Activated CD8-positive, alpha-beta T cell treated with anti-CD3 and anti-CD28 coated beads, Interleukin-2, amount 10 ng/mL, durations not matched to agents 7 days and 5 days (primary cell): ENCODE measurements at regions of chr1 and their contacts with region 1.

Region 1: DNA sequence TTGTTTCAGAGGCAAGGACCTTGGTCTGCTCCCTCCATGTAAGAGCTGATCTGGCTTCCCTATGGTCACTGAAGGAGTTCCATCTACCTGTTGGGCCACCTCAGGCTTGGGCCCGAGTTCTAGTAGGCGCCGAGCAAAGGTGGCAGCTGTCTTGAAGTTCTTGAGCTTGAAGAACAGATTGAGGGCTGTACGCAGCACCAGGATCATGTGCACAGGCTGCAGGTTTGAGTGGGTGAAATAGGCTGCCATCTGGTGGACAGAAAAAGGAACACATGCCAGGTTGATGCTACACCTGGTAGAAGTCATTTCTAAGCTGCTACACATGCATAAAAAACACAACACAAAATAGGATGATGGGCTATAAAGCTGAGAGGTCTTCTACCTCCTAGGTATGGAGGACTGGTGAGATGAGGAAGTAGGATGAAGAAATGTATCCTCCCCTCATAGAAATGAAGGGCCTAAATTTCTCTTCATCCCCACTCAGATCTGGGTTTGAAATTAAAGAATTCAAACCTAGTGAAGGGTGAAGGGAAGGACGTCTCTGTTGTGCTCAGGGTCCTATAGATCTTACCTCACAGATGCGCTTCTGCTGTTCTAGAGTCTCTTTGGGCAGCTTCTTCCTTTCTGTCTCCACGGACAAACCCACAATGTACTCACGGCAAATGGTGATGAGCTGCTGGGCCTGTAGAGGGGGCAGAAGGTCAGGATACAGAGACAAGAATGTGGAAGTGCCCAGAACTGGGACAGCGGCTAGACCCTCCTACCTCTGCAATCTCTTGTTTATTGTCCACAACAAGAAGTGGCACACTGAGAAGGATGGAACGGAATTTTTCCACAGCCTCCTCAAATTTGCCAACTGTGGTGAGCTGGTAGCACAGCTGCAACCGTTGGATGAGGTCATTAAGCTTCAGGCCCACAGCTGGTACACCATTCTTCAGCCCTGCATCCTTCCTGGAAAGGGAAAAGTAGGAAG is 6.6 kb upstream of the PEX19 start:
- DNase-seq: peak; percentile 78
- ATAC-seq: peak; percentile 90
- H3K4me3 Mint-ChIP-seq: no peak overlapping the region
- H3K27ac Mint-ChIP-seq: no peak overlapping the region
- H3K4me1 Mint-ChIP-seq: no peaks in the 10 kb centered on the region
- H3K27me3 Mint-ChIP-seq: no peaks in the 10 kb centered on the region

Region 2: GRCh38 chr1:160098852-160099561 is 192.5 kb before region 1 on chr1:
- CTCF ChIA-PET with region 1: interaction called, 109 read pairs
- POLR2A ChIA-PET with region 1: interaction called, 5 read pairs
- DNase-seq: peak; percentile 99
- ATAC-seq: peak; percentile 89
- H3K4me3 Mint-ChIP-seq: peak overlapping the region; percentile 73
- H3K27ac Mint-ChIP-seq: peak overlapping the region; percentile 88
- H3K4me1 Mint-ChIP-seq: peaks cover 55% of the 10 kb centered on the region
- H3K27me3 Mint-ChIP-seq: no peaks in the 10 kb centered on the region

Region 3: GRCh38 chr1:160148121-160148520 is 143.4 kb before region 1 on chr1:
- CTCF ChIA-PET with region 1: no interaction called
- POLR2A ChIA-PET with region 1: no interaction called
- DNase-seq: no peak
- ATAC-seq: no peak
- H3K4me3 Mint-ChIP-seq: no peak overlapping the region
- H3K27ac Mint-ChIP-seq: no peak overlapping the region
- H3K4me1 Mint-ChIP-seq: no peaks in the 10 kb centered on the region
- H3K27me3 Mint-ChIP-seq: peaks cover 6% of the 10 kb centered on the region

Region 4: DNA sequence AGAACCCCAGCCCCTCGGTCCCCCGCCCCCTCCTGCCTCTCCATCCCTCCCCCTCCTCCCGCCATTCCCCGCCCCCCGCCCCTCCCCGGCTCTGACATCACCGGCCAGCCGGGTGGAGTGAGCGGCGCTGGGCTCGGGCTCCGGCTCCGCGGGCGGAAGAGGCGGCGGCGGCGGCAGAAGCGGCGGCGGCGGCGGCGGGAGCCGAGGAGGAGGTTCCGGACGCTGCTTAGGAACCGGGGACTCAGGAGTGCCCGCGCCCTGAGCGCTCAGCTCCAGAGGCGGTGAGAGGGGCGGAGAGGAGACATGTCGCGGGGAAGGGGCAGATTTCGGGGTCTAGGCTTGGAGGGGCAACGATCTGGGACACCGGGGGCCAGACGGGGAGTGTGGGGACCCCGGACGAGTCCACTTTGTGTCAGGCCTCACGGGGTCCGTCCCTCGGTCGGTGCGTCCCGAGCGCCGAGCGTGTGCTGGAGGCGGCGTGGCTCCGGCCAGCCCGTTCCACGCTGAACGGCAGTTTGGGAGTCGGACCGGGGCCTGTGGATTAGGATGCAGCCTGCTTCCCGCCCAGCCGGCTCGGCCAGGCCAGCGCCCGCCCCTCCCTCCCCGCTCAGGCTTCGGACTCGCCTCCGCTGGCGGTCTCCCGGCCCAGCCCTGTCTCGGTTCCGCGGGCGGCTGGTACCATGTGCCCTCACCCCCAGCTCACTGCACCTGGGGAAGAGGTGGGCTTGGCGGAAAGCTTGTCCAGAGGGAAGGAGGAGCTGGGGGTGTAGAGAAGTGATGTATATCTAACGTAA is 86.1 kb before region 1 on chr1 and contains the start of gene PEA15:
- CTCF ChIA-PET with region 1: interaction called, 42 read pairs
- POLR2A ChIA-PET with region 1: no interaction called
- DNase-seq: peak; percentile 68
- ATAC-seq: peak; percentile 91
- H3K4me3 Mint-ChIP-seq: peak within 1 kb of the TSS; percentile 84
- H3K27ac Mint-ChIP-seq: peak within 1 kb of the TSS; percentile 86
- H3K4me1 Mint-ChIP-seq: peaks cover 26% of the 10 kb centered on the region
- H3K27me3 Mint-ChIP-seq: no peaks in the 10 kb centered on the region
- total RNA-seq, gene PEA15: 27.3 to 35.2 TPM

Region 5: GRCh38 chr1:160232911-160233310 is 58.6 kb before region 1 on chr1:
- CTCF ChIA-PET with region 1: interaction called, 22 read pairs
- POLR2A ChIA-PET with region 1: no interaction called
- DNase-seq: no peak
- ATAC-seq: peak; percentile 36
- H3K4me3 Mint-ChIP-seq: no peak overlapping the region
- H3K27ac Mint-ChIP-seq: no peak overlapping the region
- H3K4me1 Mint-ChIP-seq: no peaks in the 10 kb centered on the region
- H3K27me3 Mint-ChIP-seq: no peaks in the 10 kb centered on the region

Region 6: GRCh38 chr1:160261893-160262794 is 29.4 kb before region 1 on chr1 and contains the start of gene DCAF8:
- CTCF ChIA-PET with region 1: interaction called, 101 read pairs
- POLR2A ChIA-PET with region 1: interaction called, 3 read pairs
- DNase-seq: peak; percentile 99
- ATAC-seq: peak; percentile 92
- H3K4me3 Mint-ChIP-seq: peak within 1 kb of the TSS; percentile 96
- H3K27ac Mint-ChIP-seq: peak within 1 kb of the TSS; percentile 95
- H3K4me1 Mint-ChIP-seq: peaks cover 33% of the 10 kb centered on the region
- H3K27me3 Mint-ChIP-seq: no peaks in the 10 kb centered on the region
- total RNA-seq, gene DCAF8: 81.9 to 85.9 TPM

Region 7: DNA sequence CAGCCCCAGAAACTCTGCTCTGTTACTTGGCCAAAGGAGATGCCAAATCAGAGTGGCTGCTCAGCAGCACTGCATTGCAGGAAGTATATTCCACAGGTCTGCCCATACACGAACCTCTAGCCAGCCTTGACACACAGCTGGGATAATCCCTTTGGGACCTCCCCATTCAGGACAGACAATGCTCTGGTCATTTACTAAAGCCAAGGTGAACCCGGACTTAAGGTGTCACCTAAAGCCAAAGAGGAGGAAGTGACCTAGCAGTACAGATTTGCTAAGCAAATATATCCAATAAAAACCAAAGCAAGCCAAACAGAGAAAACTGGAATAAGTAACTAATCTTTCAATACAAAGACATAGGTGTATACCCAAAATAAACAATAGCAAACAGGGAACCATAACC is 23.8 kb after region 1 on chr1:
- CTCF ChIA-PET with region 1: interaction called, 13 read pairs
- POLR2A ChIA-PET with region 1: no interaction called
- DNase-seq: no peak
- ATAC-seq: no peak
- H3K4me3 Mint-ChIP-seq: no peak overlapping the region
- H3K27ac Mint-ChIP-seq: peak overlapping the region; percentile 21
- H3K4me1 Mint-ChIP-seq: no peaks in the 10 kb centered on the region
- H3K27me3 Mint-ChIP-seq: no peaks in the 10 kb centered on the region

Region 8: DNA sequence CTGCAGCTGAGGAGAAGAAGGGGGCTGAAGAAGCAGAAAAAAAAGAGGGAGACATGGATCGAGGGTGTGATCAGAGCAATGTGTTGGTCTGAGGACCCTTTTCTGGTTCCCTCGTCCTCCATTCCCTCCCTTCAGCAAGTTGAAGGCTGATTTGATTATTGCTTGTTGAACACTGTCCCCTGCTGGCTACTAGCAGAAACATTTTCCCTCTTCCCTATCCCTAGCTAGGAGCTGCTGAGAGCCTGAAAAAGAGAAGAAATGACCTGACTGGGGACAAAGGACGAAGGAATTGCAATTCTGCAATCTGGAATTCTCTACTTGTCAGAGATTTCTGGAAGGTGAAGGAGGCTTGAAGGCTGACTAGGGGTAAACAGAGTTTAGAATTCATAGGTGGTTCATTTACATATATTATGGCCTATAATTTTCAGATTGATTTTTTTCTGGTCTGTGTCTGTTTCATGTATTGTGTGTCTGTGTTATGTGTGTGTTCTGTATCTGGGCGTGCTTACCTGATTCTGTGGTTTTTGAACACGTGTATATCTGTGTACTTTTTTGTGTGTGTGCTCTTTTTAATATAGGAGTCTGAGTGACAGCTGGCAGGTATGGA is 85.1 kb after region 1 on chr1:
- CTCF ChIA-PET with region 1: interaction called, 27 read pairs
- POLR2A ChIA-PET with region 1: no interaction called
- DNase-seq: peak; percentile 55
- ATAC-seq: peak; percentile 73
- H3K4me3 Mint-ChIP-seq: no peak overlapping the region
- H3K27ac Mint-ChIP-seq: no peak overlapping the region
- H3K4me1 Mint-ChIP-seq: peaks cover 13% of the 10 kb centered on the region
- H3K27me3 Mint-ChIP-seq: peaks cover 8% of the 10 kb centered on the region